ENCODE measurements at regions of chr12 and their contacts with region 1.

Region 1: GRCh38 chr12:42322567-42322966 is 3.3 kb downstream of the ZCRB1 start:
- DNase-seq: no peak
- H3K4me3 ChIP-seq: no peak overlapping the region
- H3K27ac ChIP-seq: no peak overlapping the region
- H3K4me1 ChIP-seq: peaks cover 0 to 24% (median 10%) of the 10 kb centered on the region in 4 donors
- H3K27me3 ChIP-seq: no peaks in the 10 kb centered on the region
- CTCF ChIP-seq: no peak

Region 2: GRCh38 chr12:41869432-41869831 is 453.1 kb before region 1 on chr12:
- intact Hi-C with region 1: no loop called
- DNase-seq: no peak
- H3K4me3 ChIP-seq: no peak overlapping the region
- H3K27ac ChIP-seq: no peak overlapping the region
- H3K4me1 ChIP-seq: no peaks in the 10 kb centered on the region
- H3K27me3 ChIP-seq: no peaks in the 10 kb centered on the region
- CTCF ChIP-seq: no peak

Region 3: GRCh38 chr12:42213023-42213422 is 109.5 kb before region 1 on chr12:
- intact Hi-C with region 1: no loop called
- DNase-seq: no peak
- H3K4me3 ChIP-seq: no peak overlapping the region
- H3K27ac ChIP-seq: no peak overlapping the region
- H3K4me1 ChIP-seq: peaks cover 0 to 11% (median 7%) of the 10 kb centered on the region in 4 donors
- H3K27me3 ChIP-seq: no peaks in the 10 kb centered on the region
- CTCF ChIP-seq: no peak

Region 4: GRCh38 chr12:42237052-42237852 is 85.3 kb before region 1 on chr12:
- intact Hi-C with region 1: loop called (anchors 5 kb)
- DNase-seq: peak; percentile 55 to 82
- H3K4me3 ChIP-seq: peak overlapping the region; percentile 92 to 94
- H3K27ac ChIP-seq: peak overlapping the region; percentile 90 to 94
- H3K4me1 ChIP-seq: peaks cover 0 to 41% (median 15%) of the 10 kb centered on the region in 4 donors
- H3K27me3 ChIP-seq: no peaks in the 10 kb centered on the region
- CTCF ChIP-seq: peak; percentile 30 to 40